Caco-2 (cell line): ENCODE measurements at regions of chr11 and their contacts with region 1.

Region 1: DNA sequence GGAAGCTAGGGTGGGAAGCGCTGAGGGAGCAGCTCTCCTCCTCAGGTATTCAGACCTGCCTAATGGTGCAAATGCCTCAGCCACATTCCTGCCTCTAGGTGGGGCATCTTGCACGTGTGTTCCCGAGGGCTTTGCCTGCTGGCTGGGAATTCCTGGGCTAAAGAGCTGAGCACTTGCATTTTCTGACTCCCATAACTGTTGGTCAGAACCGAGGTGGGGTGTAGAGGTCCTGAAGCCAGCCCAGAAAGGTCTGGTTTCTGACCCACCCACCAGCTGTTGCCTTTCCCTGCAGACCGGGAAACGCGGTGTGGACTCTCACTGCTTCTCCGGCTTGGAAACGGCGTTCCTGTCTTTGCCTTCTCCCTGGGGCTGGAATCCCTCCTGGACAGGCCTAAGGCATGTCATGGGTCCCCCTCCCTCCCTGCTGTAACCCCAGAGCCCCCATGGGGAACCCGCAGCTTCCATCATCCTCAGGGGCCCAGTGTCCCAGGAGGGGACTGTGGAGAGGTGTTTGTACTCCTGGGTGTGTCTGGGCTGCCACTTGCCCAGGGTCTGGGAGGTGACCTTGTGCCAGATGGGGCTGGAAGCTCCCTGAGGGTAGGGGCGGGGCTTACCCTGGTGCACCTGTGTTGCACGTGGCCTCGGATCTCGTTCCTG is 24.0 kb upstream of the SMIM38 start:
- DNase-seq: peak; percentile 94 to 96
- H3K4me3 ChIP-seq: no peak overlapping the region
- H3K4me3 Mint-ChIP-seq: no peak overlapping the region
- H3K27ac Mint-ChIP-seq: peak overlapping the region; percentile 74
- H3K4me1 ChIP-seq: peaks cover 22% of the 10 kb centered on the region
- H3K4me1 Mint-ChIP-seq: peaks cover 16% of the 10 kb centered on the region
- H3K27me3 ChIP-seq: no peaks in the 10 kb centered on the region
- H3K27me3 Mint-ChIP-seq: no peaks in the 10 kb centered on the region
- CTCF ChIP-seq: peak; percentile 98

Region 2: DNA sequence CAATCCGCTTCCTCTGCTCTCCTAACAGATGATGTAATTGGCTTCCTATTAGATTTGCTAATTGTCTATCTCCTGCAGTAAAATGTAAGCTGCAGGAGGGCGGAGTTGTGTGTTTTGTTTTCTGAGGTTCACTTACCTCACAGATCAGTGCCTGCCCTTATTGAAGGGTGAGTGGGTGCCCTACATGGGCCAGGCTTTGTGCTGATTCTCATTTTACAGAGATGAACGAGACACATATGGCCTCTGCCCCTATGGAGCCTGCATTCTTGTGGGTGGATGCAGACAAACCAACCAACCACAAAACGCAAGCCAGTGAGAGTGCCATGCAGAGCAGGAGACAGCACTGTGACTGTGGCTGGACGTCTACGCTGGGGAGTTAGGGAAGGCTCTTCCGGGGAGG is 390.3 kb before region 1 on chr11:
- CTCF ChIA-PET with region 1: no interaction called
- POLR2A ChIA-PET with region 1: interaction called, 13 read pairs
- intact Hi-C with region 1: no loop called
- DNase-seq: no peak
- H3K4me3 ChIP-seq: no peak overlapping the region
- H3K4me3 Mint-ChIP-seq: no peak overlapping the region
- H3K27ac Mint-ChIP-seq: no peak overlapping the region
- H3K4me1 ChIP-seq: no peaks in the 10 kb centered on the region
- H3K4me1 Mint-ChIP-seq: no peaks in the 10 kb centered on the region
- H3K27me3 ChIP-seq: no peaks in the 10 kb centered on the region
- H3K27me3 Mint-ChIP-seq: no peaks in the 10 kb centered on the region
- CTCF ChIP-seq: no peak

Region 3: GRCh38 chr11:69211920-69212571 is 80.3 kb after region 1 on chr11:
- CTCF ChIA-PET with region 1: interaction called, 12 read pairs
- POLR2A ChIA-PET with region 1: no interaction called
- intact Hi-C with region 1: loop called (anchors 2 kb)
- DNase-seq: peak; percentile 29 to 32
- H3K4me3 ChIP-seq: no peak overlapping the region
- H3K4me3 Mint-ChIP-seq: no peak overlapping the region
- H3K27ac Mint-ChIP-seq: no peak overlapping the region
- H3K4me1 ChIP-seq: no peaks in the 10 kb centered on the region
- H3K4me1 Mint-ChIP-seq: no peaks in the 10 kb centered on the region
- H3K27me3 ChIP-seq: no peaks in the 10 kb centered on the region
- H3K27me3 Mint-ChIP-seq: peaks cover 2% of the 10 kb centered on the region
- CTCF ChIP-seq: peak; percentile 60 to 62

Region 4: GRCh38 chr11:69274531-69275255 is 142.9 kb after region 1 on chr11:
- CTCF ChIA-PET with region 1: interaction called, 12 read pairs
- POLR2A ChIA-PET with region 1: no interaction called
- intact Hi-C with region 1: no loop called
- DNase-seq: peak; percentile 96 to 98
- H3K4me3 ChIP-seq: no peak overlapping the region
- H3K4me3 Mint-ChIP-seq: peak overlapping the region; percentile 3
- H3K27ac Mint-ChIP-seq: peak overlapping the region; percentile 5
- H3K4me1 ChIP-seq: peaks cover 51% of the 10 kb centered on the region
- H3K4me1 Mint-ChIP-seq: peaks cover 19% of the 10 kb centered on the region
- H3K27me3 ChIP-seq: no peaks in the 10 kb centered on the region
- H3K27me3 Mint-ChIP-seq: no peaks in the 10 kb centered on the region
- CTCF ChIP-seq: no peak

Region 5: GRCh38 chr11:69382131-69383128 is 250.7 kb after region 1 on chr11:
- CTCF ChIA-PET with region 1: interaction called, 6 read pairs
- POLR2A ChIA-PET with region 1: no interaction called
- intact Hi-C with region 1: loop called (anchors 5 kb)
- DNase-seq: peak; percentile 93 to 94
- H3K4me3 ChIP-seq: peak overlapping the region; percentile 56
- H3K4me3 Mint-ChIP-seq: peak overlapping the region; percentile 82
- H3K27ac Mint-ChIP-seq: peak overlapping the region; percentile 93
- H3K4me1 ChIP-seq: peaks cover 15% of the 10 kb centered on the region
- H3K4me1 Mint-ChIP-seq: peaks cover 15% of the 10 kb centered on the region
- H3K27me3 ChIP-seq: no peaks in the 10 kb centered on the region
- H3K27me3 Mint-ChIP-seq: no peaks in the 10 kb centered on the region
- CTCF ChIP-seq: peak in 1 of 2 experiments; percentile 13